PC-9 (cell line): ENCODE measurements at regions of chr1 and their contacts with region 1.

Region 1: GRCh38 chr1:204128964-204129896 is 22.6 kb downstream of the ETNK2 start:
- DNase-seq: peak in 1 of 2 experiments; percentile 61
- H3K4me3 ChIP-seq: no peak overlapping the region
- H3K27ac ChIP-seq: peak overlapping the region; percentile 80
- H3K4me1 ChIP-seq: peaks cover 66% of the 10 kb centered on the region
- H3K27me3 ChIP-seq: no peaks in the 10 kb centered on the region
- CTCF ChIP-seq: peak; percentile 80

Region 2: DNA sequence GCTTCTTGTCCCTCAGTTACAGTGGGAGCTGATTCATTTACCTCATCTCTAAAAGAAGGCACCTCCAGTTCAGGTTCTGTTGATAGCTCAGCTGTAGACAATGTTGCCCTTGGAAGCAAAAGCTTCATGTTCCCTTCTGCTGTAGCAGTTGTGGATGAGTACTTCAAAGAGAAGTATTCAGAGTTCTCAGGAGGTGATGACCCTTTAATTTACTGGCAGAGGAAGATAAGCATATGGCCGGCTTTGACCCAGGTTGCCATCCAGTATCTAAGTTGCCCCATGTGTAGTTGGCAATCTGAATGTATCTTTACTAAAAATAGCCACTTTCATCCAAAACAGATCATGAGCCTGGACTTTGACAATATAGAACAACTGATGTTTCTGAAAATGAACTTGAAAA is 329.3 kb before region 1 on chr1:
- CTCF ChIA-PET with region 1: no interaction called
- POLR2A ChIA-PET with region 1: no interaction called
- intact Hi-C with region 1: no loop called
- DNase-seq: no peak
- H3K4me3 ChIP-seq: no peak overlapping the region
- H3K27ac ChIP-seq: no peak overlapping the region
- H3K4me1 ChIP-seq: peaks cover 13% of the 10 kb centered on the region
- H3K27me3 ChIP-seq: no peaks in the 10 kb centered on the region
- CTCF ChIP-seq: no peak

Region 3: DNA sequence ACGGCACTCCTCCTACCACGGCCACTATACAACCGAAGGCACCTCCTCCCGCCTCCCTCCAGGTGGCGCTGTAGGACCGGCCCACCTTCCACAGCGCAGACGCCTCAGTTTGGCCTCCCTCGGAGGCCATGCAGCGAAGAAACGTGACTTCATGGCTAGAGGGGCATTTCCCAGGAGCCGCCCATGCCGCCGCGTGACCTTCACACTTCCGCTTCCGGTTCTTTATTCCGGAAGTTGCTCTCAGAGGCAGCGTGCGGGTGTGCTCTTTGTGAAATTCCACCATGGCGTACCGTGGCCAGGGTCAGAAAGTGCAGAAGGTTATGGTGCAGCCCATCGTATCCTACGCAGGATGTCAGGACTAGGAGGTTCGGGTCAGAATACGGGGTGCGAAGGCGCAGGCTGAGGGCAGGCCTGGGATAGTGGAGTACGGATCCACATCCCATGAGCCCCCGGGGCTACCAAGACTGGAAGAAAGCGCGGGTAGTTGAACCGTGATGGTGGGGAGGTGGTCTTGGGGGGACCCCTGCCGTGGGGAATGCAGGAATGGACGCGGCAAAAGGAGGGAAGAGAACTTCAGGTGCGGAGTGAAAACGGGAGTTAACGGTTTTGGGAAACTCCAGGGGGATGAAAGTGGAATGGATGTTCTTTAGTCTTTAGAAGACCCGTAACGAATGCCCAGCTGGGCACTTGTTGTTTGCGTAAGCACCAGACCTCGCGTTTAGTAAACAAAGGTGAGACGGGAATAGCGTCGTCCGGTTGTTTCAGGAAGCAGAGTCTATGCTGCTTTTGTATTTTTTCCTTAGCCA is 267.6 kb before region 1 on chr1 and contains the start of gene SNRPE:
- CTCF ChIA-PET with region 1: no interaction called
- POLR2A ChIA-PET with region 1: interaction called, 6 read pairs
- intact Hi-C with region 1: loop called (anchors 1 kb)
- DNase-seq: peak; percentile 91 to 96
- H3K4me3 ChIP-seq: peak within 1 kb of the TSS; percentile 85
- H3K27ac ChIP-seq: peak within 1 kb of the TSS; percentile 66
- H3K4me1 ChIP-seq: peaks cover 21% of the 10 kb centered on the region
- H3K27me3 ChIP-seq: no peaks in the 10 kb centered on the region
- CTCF ChIP-seq: peak; percentile 95
- total RNA-seq, gene SNRPE: 201 and 218 TPM in 2 replicates

Region 4: GRCh38 chr1:203985044-203985443 is 144.2 kb before region 1 on chr1:
- CTCF ChIA-PET with region 1: no interaction called
- POLR2A ChIA-PET with region 1: no interaction called
- intact Hi-C with region 1: loop called (anchors 10 kb)
- DNase-seq: peak in 1 of 2 experiments; percentile 51
- H3K4me3 ChIP-seq: no peak overlapping the region
- H3K27ac ChIP-seq: no peak overlapping the region
- H3K4me1 ChIP-seq: peaks cover 6% of the 10 kb centered on the region; the same call in 1 of the 2 replicates
- H3K27me3 ChIP-seq: no peaks in the 10 kb centered on the region
- CTCF ChIP-seq: no peak

Region 5: GRCh38 chr1:204072931-204073836 is 56.0 kb before region 1 on chr1 and contains the start of gene SOX13:
- CTCF ChIA-PET with region 1: no interaction called
- POLR2A ChIA-PET with region 1: interaction called, 22 read pairs
- intact Hi-C with region 1: loop called (anchors 1 kb)
- DNase-seq: peak; percentile 63 to 83
- H3K4me3 ChIP-seq: peak within 1 kb of the TSS; percentile 96
- H3K27ac ChIP-seq: peak within 1 kb of the TSS; percentile 52
- H3K4me1 ChIP-seq: peaks cover 30% of the 10 kb centered on the region
- H3K27me3 ChIP-seq: no peaks in the 10 kb centered on the region
- CTCF ChIP-seq: peak; percentile 48
- total RNA-seq, gene SOX13: 89.9 and 102 TPM in 2 replicates

Region 6: DNA sequence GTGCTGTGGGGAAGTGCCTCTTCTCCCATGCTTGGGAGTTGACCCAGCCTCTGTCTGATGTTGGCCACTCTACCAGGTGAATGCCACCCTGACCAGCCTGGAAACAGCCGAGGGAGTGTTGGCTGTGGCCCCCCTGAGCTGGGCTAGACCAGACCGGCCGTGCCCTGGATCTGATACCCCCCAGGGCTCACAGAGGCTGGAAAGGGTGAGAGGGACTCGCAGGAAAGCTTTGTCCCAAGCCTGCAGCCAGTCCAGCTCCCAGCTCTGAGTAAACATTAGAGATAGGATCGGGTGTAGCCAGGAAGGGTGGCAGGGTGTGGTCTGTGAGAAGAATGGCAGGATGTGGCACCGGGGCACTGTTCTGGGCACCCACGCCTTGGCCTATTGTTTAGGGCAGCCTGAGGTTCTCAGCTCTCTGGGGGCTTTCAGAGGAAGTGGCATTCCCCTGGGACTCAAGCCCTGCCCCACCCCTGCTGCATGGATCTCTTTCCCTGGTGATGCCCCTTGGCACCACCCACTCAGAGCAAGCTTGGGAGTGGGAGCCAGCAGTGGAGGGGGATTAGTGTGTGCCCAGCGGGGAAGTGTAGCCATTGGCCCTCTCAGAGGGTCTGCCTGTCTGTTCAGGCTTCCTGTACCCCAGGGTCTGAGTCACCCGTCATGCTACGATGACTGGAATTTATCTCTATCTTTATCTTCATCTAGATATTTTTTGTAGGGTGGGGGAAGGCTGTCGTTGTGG is 24.9 kb before region 1 on chr1:
- CTCF ChIA-PET with region 1: interaction called, 3 read pairs
- POLR2A ChIA-PET with region 1: interaction called, 8 read pairs
- intact Hi-C with region 1: loop called (anchors 2 kb)
- DNase-seq: peak; percentile 88 to 92
- H3K4me3 ChIP-seq: peak overlapping the region; percentile 38
- H3K27ac ChIP-seq: peak overlapping the region; percentile 96
- H3K4me1 ChIP-seq: peaks cover 84% of the 10 kb centered on the region
- H3K27me3 ChIP-seq: no peaks in the 10 kb centered on the region
- CTCF ChIP-seq: no peak

Region 7: GRCh38 chr1:204304067-204304466 is 174.8 kb after region 1 on chr1:
- CTCF ChIA-PET with region 1: no interaction called
- POLR2A ChIA-PET with region 1: no interaction called
- intact Hi-C with region 1: no loop called
- DNase-seq: peak; percentile 31 to 73
- H3K4me3 ChIP-seq: no peak overlapping the region
- H3K27ac ChIP-seq: peak overlapping the region; percentile 84
- H3K4me1 ChIP-seq: peaks cover 63% of the 10 kb centered on the region
- H3K27me3 ChIP-seq: no peaks in the 10 kb centered on the region
- CTCF ChIP-seq: no peak

Region 8: GRCh38 chr1:204377795-204378608 is 248.8 kb after region 1 on chr1:
- CTCF ChIA-PET with region 1: no interaction called
- POLR2A ChIA-PET with region 1: no interaction called
- intact Hi-C with region 1: loop called (anchors 10 kb)
- DNase-seq: peak; percentile 75 to 79
- H3K4me3 ChIP-seq: peak overlapping the region; percentile 77
- H3K27ac ChIP-seq: peak overlapping the region; percentile 82
- H3K4me1 ChIP-seq: peaks cover 60% of the 10 kb centered on the region
- H3K27me3 ChIP-seq: no peaks in the 10 kb centered on the region
- CTCF ChIP-seq: peak; percentile 23; the same call in 1 of the 2 replicates

Region 9: GRCh38 chr1:205812878-205813754 is 1683.9 kb after region 1 on chr1 and contains the start of gene SLC41A1:
- CTCF ChIA-PET with region 1: no interaction called
- POLR2A ChIA-PET with region 1: no interaction called
- intact Hi-C with region 1: no loop called
- DNase-seq: peak; percentile 78 to 89
- H3K4me3 ChIP-seq: peak within 1 kb of the TSS; percentile 80
- H3K27ac ChIP-seq: peak within 1 kb of the TSS; percentile 32
- H3K4me1 ChIP-seq: peaks cover 14% of the 10 kb centered on the region
- H3K27me3 ChIP-seq: no peaks in the 10 kb centered on the region
- CTCF ChIP-seq: no peak
- total RNA-seq, gene SLC41A1: 26.5 and 34.5 TPM in 2 replicates